ENCODE measurements at regions of chr6 and their contacts with region 1.

Region 1: DNA sequence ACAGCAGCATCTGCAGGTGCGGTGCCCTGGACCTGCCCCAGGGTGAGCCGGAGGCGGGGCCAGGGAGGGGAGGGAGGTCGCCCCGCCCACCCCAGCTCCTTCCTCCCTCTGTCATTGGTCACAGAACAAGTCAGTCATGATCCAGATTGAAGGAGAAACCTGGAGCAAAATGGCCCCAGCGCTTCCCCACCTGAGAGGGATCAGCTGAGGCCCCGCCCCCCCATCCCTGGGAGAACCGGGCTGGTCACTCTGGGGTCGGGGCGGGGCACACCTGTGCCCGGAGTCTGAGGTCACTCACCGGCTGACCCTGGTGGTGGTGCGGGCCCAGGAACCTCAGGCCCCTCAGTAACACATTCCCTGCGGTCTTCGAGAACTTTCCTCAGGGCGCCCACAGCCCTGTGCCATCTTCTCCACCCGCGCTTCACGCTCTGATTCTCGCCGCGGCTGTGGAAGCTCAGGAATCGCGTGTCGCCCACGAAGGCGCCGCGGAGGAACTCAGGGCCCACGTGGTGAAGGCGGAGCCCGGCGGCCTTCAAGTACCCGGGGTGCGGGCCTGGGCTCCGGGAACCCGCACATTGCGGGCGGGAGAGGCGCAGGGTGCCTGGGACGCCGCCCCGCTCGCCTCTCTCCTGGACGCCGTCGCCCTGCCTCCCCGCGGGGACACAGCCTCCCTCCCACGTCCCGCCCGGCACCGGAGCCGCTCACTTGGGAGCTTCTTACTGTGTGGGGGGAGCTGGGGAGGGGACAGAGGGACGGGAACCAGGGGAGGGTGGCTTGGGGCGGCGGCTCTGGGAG is 36.4 kb upstream of the HLA-C start:
- DNase-seq: peak; percentile 68
- ATAC-seq: peak; percentile 98
- H3K4me3 Mint-ChIP-seq: peak overlapping the region; percentile 88
- H3K27ac Mint-ChIP-seq: peak overlapping the region; percentile 59
- H3K4me1 Mint-ChIP-seq: peaks cover 2% of the 10 kb centered on the region
- H3K27me3 Mint-ChIP-seq: peaks cover 12% of the 10 kb centered on the region
- CTCF ChIP-seq: no peak

Region 2: DNA sequence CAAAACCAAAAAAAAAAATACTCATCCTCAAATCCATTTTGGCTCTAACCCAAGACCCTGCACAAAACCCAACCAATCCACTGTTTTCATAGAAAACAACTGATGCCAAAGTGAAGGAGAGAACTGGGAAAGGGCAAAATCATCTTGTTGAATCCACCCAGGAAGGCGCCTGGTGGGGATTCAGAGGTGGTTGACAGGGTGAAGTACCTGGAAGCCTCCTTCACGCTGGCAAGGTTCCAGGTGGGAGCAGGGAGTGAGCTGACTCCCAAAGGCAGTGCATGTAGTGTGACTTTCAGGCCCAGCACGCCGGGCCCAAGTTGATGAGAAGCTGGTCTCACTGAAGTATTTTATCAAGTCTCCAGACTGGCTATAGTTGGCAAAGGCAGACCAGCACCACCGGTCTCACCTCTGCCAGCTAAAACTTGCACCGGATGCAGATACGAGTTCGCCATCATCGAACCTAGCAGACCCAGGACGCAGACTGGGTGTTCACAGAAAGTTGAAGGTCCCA is 707.7 kb before region 1 on chr6:
- CTCF ChIA-PET with region 1: no interaction called
- POLR2A ChIA-PET with region 1: no interaction called
- intact Hi-C with region 1: no loop called
- DNase-seq: no peak
- ATAC-seq: no peak
- H3K4me3 Mint-ChIP-seq: no peak overlapping the region
- H3K27ac Mint-ChIP-seq: no peak overlapping the region
- H3K4me1 Mint-ChIP-seq: peaks cover 9% of the 10 kb centered on the region
- H3K27me3 Mint-ChIP-seq: no peaks in the 10 kb centered on the region
- CTCF ChIP-seq: no peak

Region 3: GRCh38 chr6:30664994-30665767 is 643.1 kb before region 1 on chr6:
- CTCF ChIA-PET with region 1: no interaction called
- POLR2A ChIA-PET with region 1: no interaction called
- intact Hi-C with region 1: no loop called
- DNase-seq: no peak
- ATAC-seq: no peak
- H3K4me3 Mint-ChIP-seq: no peak overlapping the region
- H3K27ac Mint-ChIP-seq: no peak overlapping the region
- H3K4me1 Mint-ChIP-seq: peaks cover 5% of the 10 kb centered on the region
- H3K27me3 Mint-ChIP-seq: no peaks in the 10 kb centered on the region
- CTCF ChIP-seq: no peak

Region 4: DNA sequence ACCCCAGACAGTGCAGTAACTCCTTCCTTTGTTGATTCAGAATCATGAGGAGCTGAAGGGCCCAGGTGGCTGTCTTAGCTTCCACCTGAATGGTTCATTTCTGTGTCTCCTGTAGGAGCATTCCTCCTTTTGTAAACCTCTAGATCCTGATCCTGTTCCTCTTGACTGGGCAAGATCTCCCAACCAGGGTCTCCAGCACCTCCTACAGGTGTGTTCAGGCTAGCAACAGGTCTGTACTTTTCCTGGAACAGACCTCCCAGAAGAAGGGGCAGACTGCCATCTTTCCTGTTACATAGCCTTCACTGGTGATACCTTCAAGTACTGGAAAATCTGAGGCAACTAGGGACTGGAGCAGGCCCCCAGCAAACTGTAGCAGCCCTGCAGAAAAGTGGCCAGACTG is 13.6 kb after region 1 on chr6:
- CTCF ChIA-PET with region 1: no interaction called
- POLR2A ChIA-PET with region 1: no interaction called
- intact Hi-C with region 1: loop called (anchors 1 kb)
- DNase-seq: no peak
- ATAC-seq: no peak
- H3K4me3 Mint-ChIP-seq: no peak overlapping the region
- H3K27ac Mint-ChIP-seq: no peak overlapping the region
- H3K4me1 Mint-ChIP-seq: no peaks in the 10 kb centered on the region
- H3K27me3 Mint-ChIP-seq: peaks cover 34% of the 10 kb centered on the region
- CTCF ChIP-seq: no peak